ENCODE measurements at regions of chr19 and their contacts with region 1.

Region 1: GRCh38 chr19:29528350-29528945 is 2.7 kb downstream of the VSTM2B start:
- DNase-seq: peak; percentile 62
- H3K4me3 Mint-ChIP-seq: peak overlapping the region; percentile 60
- H3K27ac Mint-ChIP-seq: peak overlapping the region; percentile 33
- H3K4me1 Mint-ChIP-seq: peaks cover 18% of the 10 kb centered on the region
- H3K27me3 Mint-ChIP-seq: peaks cover 56% of the 10 kb centered on the region

Region 2: DNA sequence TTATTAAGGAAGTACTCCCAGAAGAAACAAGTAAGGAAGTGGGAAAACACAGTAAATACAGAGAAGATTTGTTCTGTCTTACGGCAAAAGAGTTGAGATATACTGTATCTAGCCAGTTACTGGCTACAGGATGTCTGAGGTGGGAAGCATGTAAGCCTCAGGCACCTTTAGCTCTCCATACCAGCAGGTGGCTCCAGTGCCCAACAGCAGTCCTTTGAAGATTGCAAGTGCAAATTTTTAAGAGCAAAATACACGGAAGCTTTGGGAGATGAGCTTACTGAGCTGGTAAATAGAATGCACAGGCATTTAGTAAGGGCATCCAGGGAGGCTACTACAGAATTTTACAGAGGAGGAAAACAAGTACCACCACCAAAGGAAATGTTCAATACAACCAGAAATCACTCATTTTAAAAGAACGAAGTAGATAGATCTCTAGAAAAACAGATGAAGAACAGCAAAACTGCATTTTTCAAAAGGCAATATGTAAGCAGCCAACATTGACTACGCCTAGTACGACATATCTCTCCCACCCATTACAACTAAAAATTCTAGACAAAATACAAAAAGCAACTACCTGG is 60.5 kb before region 1 on chr19:
- intact Hi-C with region 1: loop called (anchors 5 kb)
- DNase-seq: no peak
- H3K4me3 Mint-ChIP-seq: no peak overlapping the region
- H3K27ac Mint-ChIP-seq: no peak overlapping the region
- H3K4me1 Mint-ChIP-seq: no peaks in the 10 kb centered on the region
- H3K27me3 Mint-ChIP-seq: peaks cover 13% of the 10 kb centered on the region

Region 3: DNA sequence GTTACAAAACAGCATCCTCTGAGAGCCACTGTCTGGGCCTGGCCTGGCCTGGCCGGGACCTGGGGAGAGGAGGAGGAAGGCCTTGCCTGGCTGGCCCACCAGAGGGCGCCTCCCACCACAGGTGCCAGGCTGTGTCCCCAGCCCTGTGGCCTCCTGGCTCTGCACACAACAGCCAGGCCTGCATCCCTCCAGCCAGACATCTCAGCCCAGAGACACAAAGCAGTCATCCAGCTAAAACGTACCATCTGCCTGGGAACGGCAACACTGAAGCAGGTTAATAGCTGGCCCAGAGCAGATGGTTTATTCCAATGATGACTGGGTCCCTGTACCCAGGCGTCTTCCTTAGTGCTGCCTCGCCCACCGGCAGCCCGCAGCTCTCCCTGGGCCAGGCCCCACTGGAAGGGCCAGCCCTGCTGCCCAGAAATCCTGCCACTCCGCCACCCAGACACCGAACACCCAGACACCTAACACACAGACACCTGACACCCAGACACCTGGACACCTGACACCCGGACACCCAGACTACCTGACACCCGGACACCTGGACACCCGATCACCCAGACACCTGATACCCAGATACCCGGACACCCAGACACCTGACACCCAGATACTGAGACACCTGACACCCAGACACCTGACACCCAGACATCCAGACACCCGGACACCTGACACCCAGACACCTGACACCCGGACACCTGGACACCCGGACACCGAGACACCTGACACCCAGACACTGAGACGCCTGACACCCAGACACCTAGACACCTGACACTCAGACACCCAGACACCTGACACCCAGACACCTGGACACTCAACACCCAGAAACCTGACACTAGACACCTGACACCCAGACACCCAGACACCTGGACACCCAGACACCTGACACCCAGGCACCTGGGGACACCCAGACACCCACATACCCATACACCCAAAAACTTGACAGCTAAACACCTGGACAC is 166.5 kb after region 1 on chr19:
- intact Hi-C with region 1: loop called (anchors 10 kb)
- DNase-seq: peak; percentile 71
- H3K4me3 Mint-ChIP-seq: no peak overlapping the region
- H3K27ac Mint-ChIP-seq: no peak overlapping the region
- H3K4me1 Mint-ChIP-seq: peaks cover 8% of the 10 kb centered on the region
- H3K27me3 Mint-ChIP-seq: no peaks in the 10 kb centered on the region

Region 4: DNA sequence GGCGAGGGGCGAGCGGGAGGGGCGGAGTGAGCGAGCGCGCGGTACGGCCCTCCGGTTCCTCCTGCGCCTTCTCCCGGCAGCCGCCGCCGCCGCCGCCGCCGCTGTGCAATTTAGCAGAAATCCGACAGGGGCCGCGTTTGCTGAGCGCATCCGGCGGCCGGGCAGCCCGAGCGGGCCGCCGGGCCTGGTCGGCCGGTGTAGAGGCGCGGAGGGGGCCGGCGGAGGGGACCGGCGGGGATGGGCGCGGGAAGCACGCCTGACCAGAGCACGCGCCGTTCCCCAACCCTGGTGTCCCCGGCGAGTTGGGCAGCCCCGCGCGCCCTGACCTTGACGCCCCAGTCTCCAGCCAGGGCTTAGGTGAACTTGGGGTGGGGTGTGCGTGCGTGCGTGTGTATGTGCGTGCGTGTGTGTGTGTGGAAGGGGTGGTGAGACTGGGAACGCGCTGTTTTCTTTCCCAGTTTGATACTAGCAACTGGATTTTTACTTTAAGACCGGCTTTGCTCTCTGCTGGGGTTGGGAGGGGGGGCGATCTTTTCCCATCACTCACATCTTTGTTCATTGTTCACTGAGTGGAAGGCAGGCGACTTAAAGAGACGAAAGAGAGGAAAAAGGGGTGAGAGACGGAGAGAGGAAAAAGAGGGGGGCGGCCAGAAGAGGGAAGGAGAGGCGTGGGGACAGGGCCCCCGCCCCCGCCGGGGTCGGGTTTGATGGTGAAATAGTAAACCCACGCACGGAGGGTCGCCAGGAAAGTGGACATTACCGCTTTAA is 699.4 kb after region 1 on chr19:
- intact Hi-C with region 1: loop called (anchors 2 kb)
- DNase-seq: peak; percentile 56
- H3K4me3 Mint-ChIP-seq: peak overlapping the region; percentile 39
- H3K27ac Mint-ChIP-seq: no peak overlapping the region
- H3K4me1 Mint-ChIP-seq: peaks cover 28% of the 10 kb centered on the region
- H3K27me3 Mint-ChIP-seq: peaks cover 72% of the 10 kb centered on the region

Region 5: GRCh38 chr19:31356587-31357314 is 1828.3 kb after region 1 on chr19:
- intact Hi-C with region 1: loop called (anchors 5 kb)
- DNase-seq: no peak
- H3K4me3 Mint-ChIP-seq: no peak overlapping the region
- H3K27ac Mint-ChIP-seq: peak overlapping the region; percentile 42
- H3K4me1 Mint-ChIP-seq: peaks cover 17% of the 10 kb centered on the region
- H3K27me3 Mint-ChIP-seq: peaks cover 62% of the 10 kb centered on the region

Measured in activated T-helper 2 cell treated with anti-CD3 and anti-CD28 coated beads, Interferon-gamma antibody, Interleukin-2, Interleukin-4, amounts not matched to agents 10 μg/mL and 5 μg/mL and 100 μg/mL, durations not matched to agents 14 hours and 24 hours and 36 hours (primary cell).